CD4-positive, alpha-beta memory T cell (primary cell): ENCODE measurements at regions of chr11 and their contacts with region 1.

Region 1: DNA sequence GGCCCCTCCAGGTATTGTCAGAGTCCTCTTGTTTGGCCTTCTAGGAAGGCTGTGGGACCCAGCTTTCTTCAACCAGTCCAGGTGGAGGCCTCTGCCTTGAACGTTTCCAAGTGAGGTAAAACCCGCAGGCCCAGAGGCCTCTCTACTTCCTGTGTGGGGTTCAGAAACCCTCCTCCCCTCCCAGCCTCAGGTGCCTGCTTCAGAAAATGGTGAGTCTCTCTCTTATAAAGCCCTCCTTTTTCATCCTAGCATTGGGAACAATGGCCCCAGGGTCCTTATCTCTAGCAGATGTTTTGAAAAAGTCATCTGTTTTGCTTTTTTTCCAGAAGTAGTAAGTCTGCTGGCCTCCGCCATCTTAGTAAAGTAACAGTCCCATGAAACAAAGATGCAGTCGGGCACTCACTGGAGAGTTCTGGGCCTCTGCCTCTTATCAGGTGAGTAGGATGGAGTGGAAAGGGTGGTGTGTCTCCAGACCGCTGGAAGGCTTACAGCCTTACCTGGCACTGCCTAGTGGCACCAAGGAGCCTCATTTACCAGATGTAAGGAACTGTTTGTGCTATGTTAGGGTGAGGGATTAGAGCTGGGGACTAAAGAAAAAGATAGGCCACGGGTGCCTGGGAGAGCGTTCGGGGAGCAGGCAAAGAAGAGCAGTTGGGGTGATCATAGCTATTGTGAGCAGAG is at the start of gene CD3E:
- DNase-seq: peak; percentile 76 to 83 (median 79)
- H3K4me3 ChIP-seq: peak within 1 kb of the TSS; percentile 96 to 97
- H3K4me3 Mint-ChIP-seq: peak within 1 kb of the TSS; percentile 99 to 100 (median 100)
- H3K27ac ChIP-seq: peak within 1 kb of the TSS; percentile 91
- H3K27ac Mint-ChIP-seq: peak within 1 kb of the TSS; percentile 98 to 100 (median 99)
- H3K4me1 ChIP-seq: peaks cover 68% of the 10 kb centered on the region
- H3K4me1 Mint-ChIP-seq: peaks cover 46 to 94% (median 66%) of the 10 kb centered on the region in 4 donors
- H3K27me3 ChIP-seq: no peaks in the 10 kb centered on the region
- H3K27me3 Mint-ChIP-seq: no peaks in the 10 kb centered on the region
- total RNA-seq, gene CD3E: 581 to 618 TPM

Region 2: GRCh38 chr11:118258410-118258809 is 46.3 kb before region 1 on chr11:
- CTCF ChIA-PET with region 1: no interaction called
- POLR2A ChIA-PET with region 1: no interaction called
- intact Hi-C with region 1: no loop called
- DNase-seq: no peak
- H3K4me3 ChIP-seq: no peak overlapping the region
- H3K4me3 Mint-ChIP-seq: no peak overlapping the region
- H3K27ac ChIP-seq: no peak overlapping the region
- H3K27ac Mint-ChIP-seq: peak overlapping the region in 1 of 7 donors; percentile 43
- H3K4me1 ChIP-seq: peaks cover 24% of the 10 kb centered on the region
- H3K4me1 Mint-ChIP-seq: peaks cover 7 to 19% (median 12%) of the 10 kb centered on the region in 4 donors
- H3K27me3 ChIP-seq: no peaks in the 10 kb centered on the region
- H3K27me3 Mint-ChIP-seq: no peaks in the 10 kb centered on the region

Region 3: GRCh38 chr11:118321386-118322121 is 16.8 kb after region 1 on chr11:
- CTCF ChIA-PET with region 1: no interaction called
- POLR2A ChIA-PET with region 1: interaction called, 32 read pairs
- intact Hi-C with region 1: no loop called
- DNase-seq: no peak
- H3K4me3 ChIP-seq: no peak overlapping the region
- H3K4me3 Mint-ChIP-seq: peak overlapping the region in 5 of 8 donors; percentile 9 to 76 (median 38)
- H3K27ac ChIP-seq: no peak overlapping the region
- H3K27ac Mint-ChIP-seq: peak overlapping the region in 6 of 7 donors; percentile 13 to 89 (median 72)
- H3K4me1 ChIP-seq: peaks cover 59% of the 10 kb centered on the region
- H3K4me1 Mint-ChIP-seq: peaks cover 45 to 78% (median 62%) of the 10 kb centered on the region in 4 donors
- H3K27me3 ChIP-seq: no peaks in the 10 kb centered on the region
- H3K27me3 Mint-ChIP-seq: no peaks in the 10 kb centered on the region

Region 4: GRCh38 chr11:118338637-118339061 is 33.9 kb after region 1 on chr11:
- CTCF ChIA-PET with region 1: no interaction called
- POLR2A ChIA-PET with region 1: no interaction called
- intact Hi-C with region 1: loop called (anchors 1 kb)
- DNase-seq: peak; percentile 87 to 98 (median 90)
- H3K4me3 ChIP-seq: peak overlapping the region; percentile 89 to 97
- H3K4me3 Mint-ChIP-seq: peak overlapping the region; percentile 91 to 100 (median 97)
- H3K27ac ChIP-seq: peak overlapping the region; percentile 93
- H3K27ac Mint-ChIP-seq: peak overlapping the region; percentile 98 to 100 (median 99)
- H3K4me1 ChIP-seq: peaks cover 75% of the 10 kb centered on the region
- H3K4me1 Mint-ChIP-seq: peaks cover 32 to 79% (median 55%) of the 10 kb centered on the region in 4 donors
- H3K27me3 ChIP-seq: no peaks in the 10 kb centered on the region
- H3K27me3 Mint-ChIP-seq: peaks cover 0 to 1% of the 10 kb centered on the region in 2 donors

Region 5: DNA sequence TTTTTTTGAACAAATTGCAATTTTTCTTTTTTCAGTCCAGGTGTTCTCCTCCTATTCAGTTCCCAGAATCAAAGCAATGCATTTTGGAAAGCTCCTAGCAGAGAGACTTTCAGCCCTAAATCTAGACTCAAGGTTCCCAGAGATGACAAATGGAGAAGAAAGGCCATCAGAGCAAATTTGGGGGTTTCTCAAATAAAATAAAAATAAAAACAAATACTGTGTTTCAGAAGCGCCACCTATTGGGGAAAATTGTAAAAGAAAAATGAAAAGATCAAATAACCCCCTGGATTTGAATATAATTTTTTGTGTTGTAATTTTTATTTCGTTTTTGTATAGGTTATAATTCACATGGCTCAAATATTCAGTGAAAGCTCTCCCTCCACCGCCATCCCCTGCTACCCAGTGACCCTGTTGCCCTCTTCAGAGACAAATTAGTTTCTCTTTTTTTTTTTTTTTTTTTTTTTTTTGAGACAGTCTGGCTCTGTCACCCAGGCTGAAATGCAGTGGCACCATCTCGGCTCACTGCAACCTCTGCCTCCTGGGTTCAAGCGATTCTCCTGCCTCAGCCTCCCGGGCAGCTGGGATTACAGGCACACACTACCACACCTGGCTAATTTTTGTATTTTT is 48.5 kb after region 1 on chr11:
- CTCF ChIA-PET with region 1: no interaction called
- POLR2A ChIA-PET with region 1: no interaction called
- intact Hi-C with region 1: loop called (anchors 2 kb)
- DNase-seq: peak in 4 of 5 donors; percentile 53 to 64 (median 63)
- H3K4me3 ChIP-seq: no peak overlapping the region
- H3K4me3 Mint-ChIP-seq: no peak overlapping the region
- H3K27ac ChIP-seq: peak overlapping the region; percentile 44
- H3K27ac Mint-ChIP-seq: peak overlapping the region; percentile 86 to 96 (median 93)
- H3K4me1 ChIP-seq: peaks cover 22% of the 10 kb centered on the region
- H3K4me1 Mint-ChIP-seq: peaks cover 22 to 29% (median 24%) of the 10 kb centered on the region in 4 donors
- H3K27me3 ChIP-seq: no peaks in the 10 kb centered on the region
- H3K27me3 Mint-ChIP-seq: no peaks in the 10 kb centered on the region